ENCODE measurements at regions of chr17 and their contacts with region 1.

Region 1: DNA sequence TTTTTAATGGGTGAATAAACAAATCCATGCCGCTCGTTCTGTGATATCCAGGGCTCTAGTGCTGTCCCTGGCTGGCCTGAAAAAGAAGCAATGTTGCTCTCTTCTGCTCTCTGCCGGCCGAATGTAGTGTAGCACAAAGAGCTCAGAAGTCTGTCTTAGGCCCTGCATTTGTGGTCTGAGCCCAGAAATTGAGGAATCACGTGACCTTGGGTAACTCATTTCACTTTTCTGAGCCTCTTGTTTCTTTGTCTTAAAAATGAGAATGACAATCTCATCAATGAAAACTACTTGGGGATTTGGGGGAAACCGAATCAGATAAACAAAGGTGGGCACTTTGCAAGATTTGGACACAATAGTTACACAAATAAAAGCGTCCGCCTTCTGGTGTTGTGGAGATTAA is 381.6 kb upstream of the ASIC2 start:
- DNase-seq: peak; percentile 62
- ATAC-seq: peak; percentile 57
- H3K4me3 Mint-ChIP-seq: no peak overlapping the region
- H3K27ac Mint-ChIP-seq: no peak overlapping the region
- H3K4me1 Mint-ChIP-seq: no peaks in the 10 kb centered on the region
- H3K27me3 Mint-ChIP-seq: peaks cover 4% of the 10 kb centered on the region

Region 2: GRCh38 chr17:33038740-33039139 is 635.9 kb before region 1 on chr17:
- CTCF ChIA-PET with region 1: no interaction called
- POLR2A ChIA-PET with region 1: no interaction called
- DNase-seq: peak; percentile 38
- ATAC-seq: no peak
- H3K4me3 Mint-ChIP-seq: no peak overlapping the region
- H3K27ac Mint-ChIP-seq: no peak overlapping the region
- H3K4me1 Mint-ChIP-seq: no peaks in the 10 kb centered on the region
- H3K27me3 Mint-ChIP-seq: peaks cover 6% of the 10 kb centered on the region

Region 3: DNA sequence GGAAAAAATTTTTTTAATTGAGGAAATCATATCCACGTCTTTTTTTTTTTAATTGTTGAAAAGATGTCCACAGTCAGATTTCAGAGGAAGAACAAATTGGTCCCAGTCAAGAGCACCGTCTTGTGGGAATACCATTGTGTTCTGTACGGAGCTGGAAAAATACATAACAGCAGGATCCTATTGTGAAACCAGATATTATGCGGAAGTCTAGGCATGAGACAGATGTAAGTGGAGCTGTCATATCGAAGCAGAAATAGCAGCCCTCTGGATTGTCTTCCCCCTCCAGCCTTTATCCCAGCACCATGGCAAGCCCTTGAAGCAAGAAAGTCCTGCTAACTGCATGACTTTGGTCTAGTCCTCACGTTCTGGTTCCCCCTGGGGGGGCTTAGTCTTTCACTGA is 10.1 kb after region 1 on chr17:
- CTCF ChIA-PET with region 1: interaction called, 12 read pairs
- POLR2A ChIA-PET with region 1: no interaction called
- DNase-seq: no peak
- ATAC-seq: no peak
- H3K4me3 Mint-ChIP-seq: no peak overlapping the region
- H3K27ac Mint-ChIP-seq: no peak overlapping the region
- H3K4me1 Mint-ChIP-seq: no peaks in the 10 kb centered on the region
- H3K27me3 Mint-ChIP-seq: no peaks in the 10 kb centered on the region